ENCODE measurements at regions of chr9 and their contacts with region 1.

Region 1: GRCh38 chr9:2655411-2655901 is 33.9 kb downstream of the VLDLR start:
- DNase-seq: peak in 7 of 9 experiments; percentile 7 to 60 (median 20)
- ATAC-seq: peak; percentile 76
- H3K4me3 ChIP-seq: no peak overlapping the region
- H3K4me3 Mint-ChIP-seq: no peak overlapping the region
- H3K27ac ChIP-seq: peak overlapping the region; percentile 16 to 51
- H3K27ac Mint-ChIP-seq: peak overlapping the region; percentile 70
- H3K4me1 ChIP-seq: peaks cover 17% of the 10 kb centered on the region
- H3K4me1 Mint-ChIP-seq: peaks cover 19% of the 10 kb centered on the region
- H3K27me3 ChIP-seq: no peaks in the 10 kb centered on the region
- H3K27me3 Mint-ChIP-seq: no peaks in the 10 kb centered on the region
- CTCF ChIP-seq: no peak

Region 2: DNA sequence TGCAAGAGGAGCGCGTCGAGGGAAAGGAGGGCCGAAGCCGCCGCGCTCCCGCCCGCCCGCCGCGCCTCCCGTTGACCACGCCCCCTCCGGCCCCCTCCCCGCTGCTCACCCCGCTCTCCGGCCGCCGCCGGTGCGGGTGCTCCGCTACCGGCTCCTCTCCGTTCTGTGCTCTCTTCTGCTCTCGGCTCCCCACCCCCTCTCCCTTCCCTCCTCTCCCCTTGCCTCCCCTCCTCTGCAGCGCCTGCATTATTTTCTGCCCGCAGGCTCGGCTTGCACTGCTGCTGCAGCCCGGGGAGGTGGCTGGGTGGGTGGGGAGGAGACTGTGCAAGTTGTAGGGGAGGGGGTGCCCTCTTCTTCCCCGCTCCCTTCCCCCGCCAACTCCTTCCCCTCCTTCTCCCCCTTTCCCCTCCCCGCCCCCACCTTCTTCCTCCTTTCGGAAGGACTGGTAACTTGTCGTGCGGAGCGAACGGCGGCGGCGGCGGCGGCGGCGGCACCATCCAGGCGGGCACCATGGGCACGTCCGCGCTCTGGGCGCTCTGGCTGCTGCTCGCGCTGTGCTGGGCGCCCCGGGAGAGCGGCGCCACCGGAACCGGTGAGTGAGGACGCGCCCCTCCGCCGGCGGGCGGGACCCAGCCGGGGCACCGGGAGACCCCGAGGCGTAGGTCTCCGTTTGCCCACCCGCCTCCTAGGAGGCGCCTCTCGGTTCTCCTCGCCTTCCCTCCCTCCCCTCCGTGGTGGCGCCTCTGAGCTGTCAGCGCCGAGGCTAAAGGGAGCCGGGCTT is 33.6 kb before region 1 on chr9 and contains the start of gene VLDLR:
- CTCF ChIA-PET with region 1: interaction called, 3 read pairs
- POLR2A ChIA-PET with region 1: no interaction called
- intact Hi-C with region 1: loop called in 1 of 2 experiments (anchors 2 kb)
- DNase-seq: peak in 5 of 9 experiments; percentile 8 to 51 (median 20)
- ATAC-seq: peak; percentile 36
- H3K4me3 ChIP-seq: peak within 1 kb of the TSS; percentile 36
- H3K4me3 Mint-ChIP-seq: peak within 1 kb of the TSS; percentile 82
- H3K27ac ChIP-seq: no peak within 1 kb of the TSS
- H3K27ac Mint-ChIP-seq: no peak within 1 kb of the TSS
- H3K4me1 ChIP-seq: peaks cover 14% of the 10 kb centered on the region
- H3K4me1 Mint-ChIP-seq: peaks cover 17% of the 10 kb centered on the region
- H3K27me3 ChIP-seq: peaks cover 9 to 10% of the 10 kb centered on the region in 2 experiments
- H3K27me3 Mint-ChIP-seq: peaks cover 50% of the 10 kb centered on the region
- CTCF ChIP-seq: no peak
- total RNA-seq, gene VLDLR: 0.22 TPM in 1 of 2 experiments, not detected in the other

Region 3: DNA sequence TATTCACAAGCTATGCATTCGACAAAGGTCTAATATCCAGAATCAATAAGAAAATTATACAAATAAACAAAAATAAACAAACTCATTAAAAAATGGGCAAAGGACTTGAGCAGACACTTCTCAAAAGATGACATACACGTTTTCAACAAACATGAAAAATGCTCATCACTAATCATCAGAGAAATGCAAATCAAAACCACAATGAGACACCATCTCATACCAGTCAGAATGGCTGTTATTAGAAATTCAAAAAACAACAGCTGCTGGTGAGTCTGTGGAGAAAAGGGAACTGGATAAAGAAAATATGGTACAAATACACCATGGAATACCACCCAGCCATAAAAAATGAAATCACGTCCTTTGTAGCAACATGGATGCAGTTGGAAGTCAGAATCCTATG is 233.6 kb after region 1 on chr9:
- CTCF ChIA-PET with region 1: no interaction called
- POLR2A ChIA-PET with region 1: no interaction called
- intact Hi-C with region 1: no loop called
- DNase-seq: no peak
- ATAC-seq: no peak
- H3K4me3 ChIP-seq: no peak overlapping the region
- H3K4me3 Mint-ChIP-seq: no peak overlapping the region
- H3K27ac ChIP-seq: no peak overlapping the region
- H3K27ac Mint-ChIP-seq: no peak overlapping the region
- H3K4me1 ChIP-seq: no peaks in the 10 kb centered on the region
- H3K4me1 Mint-ChIP-seq: no peaks in the 10 kb centered on the region
- H3K27me3 ChIP-seq: peaks cover 0 to 3% of the 10 kb centered on the region in 2 experiments
- H3K27me3 Mint-ChIP-seq: peaks cover 26% of the 10 kb centered on the region
- CTCF ChIP-seq: no peak